ENCODE measurements at regions of chr20 and their contacts with region 1.

Region 1: GRCh38 chr20:46089417-46090388 is at the start of gene NCOA5:
- DNase-seq: peak; percentile 86 to 97
- H3K4me3 ChIP-seq: peak within 1 kb of the TSS; percentile 85
- H3K27ac ChIP-seq: peak within 1 kb of the TSS; percentile 83
- H3K4me1 ChIP-seq: peaks cover 43% of the 10 kb centered on the region
- H3K27me3 ChIP-seq: no peaks in the 10 kb centered on the region
- CTCF ChIP-seq: no peak; the same call in 1 of the 2 replicates
- total RNA-seq, gene NCOA5: 15.8 and 28.1 TPM in 2 replicates

Region 2: DNA sequence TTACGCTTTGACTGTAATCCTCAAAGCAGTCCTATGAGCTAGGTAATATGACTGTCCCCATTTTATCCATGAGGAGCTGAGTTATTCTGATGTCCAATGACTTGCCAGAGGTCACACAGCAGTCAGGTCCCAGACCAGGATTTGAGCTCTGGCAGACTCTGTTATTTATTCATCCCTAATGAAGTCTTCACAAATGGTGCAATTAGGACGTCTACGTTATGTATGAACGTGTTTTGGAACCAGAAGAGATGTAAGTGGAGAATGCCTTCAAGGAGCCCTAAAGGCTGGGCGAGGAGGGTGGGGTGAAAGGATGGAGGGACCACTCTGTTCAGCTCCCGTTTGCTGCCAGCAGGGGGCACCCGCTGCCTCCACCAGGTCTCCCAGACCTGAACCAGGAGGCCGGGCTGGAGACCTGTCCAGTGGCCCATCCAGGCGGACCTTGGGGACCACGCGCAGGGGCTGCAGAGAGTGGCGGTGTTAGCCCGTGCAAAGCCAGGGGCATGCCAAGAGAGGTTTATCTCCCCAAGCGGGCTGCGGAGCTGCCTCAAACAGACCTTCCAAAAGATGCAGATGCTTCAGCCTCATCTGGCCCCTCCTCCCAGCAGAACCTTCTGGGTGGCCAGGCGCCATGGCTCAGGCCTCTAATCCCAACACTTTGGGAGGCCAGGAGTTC is 102.5 kb before region 1 on chr20:
- CTCF ChIA-PET with region 1: no interaction called
- POLR2A ChIA-PET with region 1: no interaction called
- intact Hi-C with region 1: loop called (anchors 1 kb)
- DNase-seq: peak; percentile 60 to 85
- H3K4me3 ChIP-seq: no peak overlapping the region
- H3K27ac ChIP-seq: no peak overlapping the region
- H3K4me1 ChIP-seq: peaks cover 5% of the 10 kb centered on the region
- H3K27me3 ChIP-seq: no peaks in the 10 kb centered on the region
- CTCF ChIP-seq: peak; percentile 93

Region 3: DNA sequence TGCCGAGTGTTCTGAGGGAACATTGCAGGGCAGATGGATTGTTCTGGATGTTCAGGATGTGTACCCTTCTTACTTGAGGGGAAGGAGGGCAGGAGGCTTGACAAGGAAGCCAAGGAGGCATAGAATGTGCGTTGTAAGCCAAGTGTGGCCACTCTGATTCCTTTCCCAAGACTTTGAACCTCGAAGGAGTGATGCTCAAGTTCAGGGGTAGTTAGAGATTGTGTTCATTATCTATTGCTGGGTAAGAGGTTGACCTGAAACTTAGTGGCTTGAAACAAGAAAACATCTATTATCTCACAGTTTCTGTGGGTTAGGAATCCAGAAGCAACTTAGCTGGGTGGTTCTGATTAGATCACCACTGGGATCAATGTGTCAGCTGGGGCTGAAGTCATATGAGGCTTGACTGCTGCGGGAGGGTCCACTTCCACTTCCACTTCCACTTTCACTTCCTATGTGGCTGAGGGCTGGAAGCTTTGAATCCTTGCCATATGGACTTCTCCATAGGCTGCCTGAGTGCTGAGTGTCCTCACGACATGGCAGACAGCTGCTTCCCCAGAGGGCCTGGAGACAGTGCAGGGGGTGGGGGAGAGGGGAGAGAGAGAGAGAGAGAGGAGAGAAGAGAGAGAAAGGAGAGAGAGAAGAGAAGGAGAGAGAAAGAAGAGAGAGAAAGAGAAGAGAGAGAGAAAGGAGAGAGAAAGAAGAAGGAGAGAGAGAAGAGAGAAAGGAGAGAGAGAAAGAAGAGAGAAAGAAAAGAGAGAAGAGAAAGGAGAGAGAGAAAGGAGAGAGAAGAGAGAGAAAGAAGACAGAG is 21.5 kb after region 1 on chr20:
- CTCF ChIA-PET with region 1: no interaction called
- POLR2A ChIA-PET with region 1: no interaction called
- intact Hi-C with region 1: no loop called
- DNase-seq: no peak
- H3K4me3 ChIP-seq: no peak overlapping the region
- H3K27ac ChIP-seq: no peak overlapping the region
- H3K4me1 ChIP-seq: no peaks in the 10 kb centered on the region
- H3K27me3 ChIP-seq: peaks cover 93% of the 10 kb centered on the region
- CTCF ChIP-seq: no peak